ENCODE measurements at regions of chr19 and their contacts with region 1.

Region 1: GRCh38 chr19:21586311-21587116 is 81.1 kb downstream of the ZNF429 start:
- DNase-seq: no peak

Region 2: GRCh38 chr19:20664901-20665781 is 921.4 kb before region 1 on chr19:
- intact Hi-C with region 1: loop called in 1 of 2 experiments (anchors 2 kb)
- DNase-seq: no peak